Activated T-helper 1 cell treated with anti-CD3 and anti-CD28 coated beads, Interleukin-12 subunit alpha, Interleukin-12 subunit beta, Interleukin-2, Interleukin-4 antibody, amounts not matched to agents 30 ng/mL and 10 ng/mL and 1 ng/mL, durations not matched to agents 14 hours and 24 hours and 36 hours (primary cell): ENCODE measurements at regions of chr7 and their contacts with region 1.

Region 1: GRCh38 chr7:140696680-140697446 is at the start of gene NDUFB2:
- DNase-seq: peak; percentile 85
- H3K4me3 Mint-ChIP-seq: peak within 1 kb of the TSS; percentile 90
- H3K27ac Mint-ChIP-seq: peak within 1 kb of the TSS; percentile 96
- H3K4me1 Mint-ChIP-seq: peaks cover 30% of the 10 kb centered on the region
- H3K27me3 Mint-ChIP-seq: no peaks in the 10 kb centered on the region
- total RNA-seq, gene NDUFB2: 178 and 194 TPM in 2 replicates

Region 2: DNA sequence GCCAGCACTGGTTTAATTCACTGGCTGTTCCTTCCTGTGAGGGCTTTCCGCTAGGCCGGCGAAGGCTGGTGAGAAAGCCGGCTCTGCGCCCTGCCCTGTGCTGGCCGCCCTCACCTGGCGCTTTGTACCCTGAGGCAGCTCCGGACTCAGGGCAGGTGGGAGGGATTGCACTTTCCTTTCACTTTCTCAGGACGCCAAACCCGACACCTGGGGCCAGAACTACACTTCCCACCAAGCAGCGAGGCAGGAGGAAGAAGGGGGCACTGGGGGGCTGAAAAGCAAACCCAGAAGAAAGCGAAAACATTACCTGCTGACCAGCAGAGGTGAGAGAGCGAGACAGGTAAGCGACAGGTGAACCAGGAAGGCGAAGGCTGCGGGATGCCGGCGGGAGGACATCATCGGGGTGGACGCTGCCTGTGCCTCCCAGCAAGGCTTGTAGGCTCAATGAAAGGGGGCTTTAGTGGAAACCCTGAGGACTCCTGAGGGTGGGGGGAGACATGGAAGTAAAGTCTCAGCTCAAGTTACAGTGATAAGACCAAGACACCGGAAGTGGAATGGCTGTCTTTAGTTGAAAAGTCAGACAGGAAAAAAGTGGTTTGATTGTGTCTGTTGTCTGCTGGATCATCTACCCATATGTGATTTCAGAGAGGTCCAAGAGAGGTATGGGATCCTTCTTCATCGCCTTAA is 292.8 kb before region 1 on chr7 and contains the start of gene RAB19:
- intact Hi-C with region 1: loop called (anchors 5 kb)
- DNase-seq: peak; percentile 26
- H3K4me3 Mint-ChIP-seq: peak within 1 kb of the TSS; percentile 95
- H3K27ac Mint-ChIP-seq: peak within 1 kb of the TSS; percentile 90
- H3K4me1 Mint-ChIP-seq: peaks cover 49% of the 10 kb centered on the region
- H3K27me3 Mint-ChIP-seq: no peaks in the 10 kb centered on the region
- total RNA-seq, gene RAB19: 23.9 and 27.0 TPM in 2 replicates

Region 3: DNA sequence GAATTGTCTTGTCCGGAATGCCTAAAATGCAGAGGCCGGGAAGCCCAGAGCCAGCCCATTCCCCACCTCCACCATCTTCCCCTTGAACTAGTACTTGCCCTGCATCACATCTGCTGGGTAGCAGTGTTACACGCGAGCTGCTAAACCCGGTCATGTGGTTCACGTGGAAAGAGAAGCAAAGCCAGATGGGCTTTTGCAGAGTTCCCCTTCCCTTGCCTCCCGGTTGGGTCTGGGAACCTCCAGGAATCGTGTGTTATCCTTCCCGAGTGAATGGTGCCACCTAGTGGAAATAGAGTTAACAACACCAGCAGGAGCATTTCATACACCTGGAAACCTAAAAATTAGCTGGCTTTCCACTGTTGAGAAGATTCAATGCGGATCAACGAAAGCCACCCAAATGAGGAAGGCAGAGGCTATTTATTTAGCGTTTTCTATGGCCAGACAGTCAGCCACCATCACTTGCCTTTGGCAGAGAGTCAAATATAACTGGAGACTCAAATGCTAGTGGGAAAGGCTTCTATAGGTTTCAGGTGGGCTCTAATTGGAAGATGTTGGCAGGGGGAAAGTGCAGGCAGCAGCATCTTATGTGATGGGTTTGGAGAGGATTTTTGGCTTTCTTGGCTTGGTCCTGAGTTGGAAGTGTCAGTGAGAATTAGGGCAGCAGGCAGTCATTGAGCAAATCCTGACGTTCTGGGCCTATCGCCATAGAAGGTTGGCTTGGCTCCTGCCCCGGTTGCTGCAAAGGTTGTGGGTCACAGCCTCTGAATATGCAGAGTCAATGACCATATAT is 43.3 kb before region 1 on chr7:
- intact Hi-C with region 1: loop called (anchors 1 kb)
- DNase-seq: no peak
- H3K4me3 Mint-ChIP-seq: no peak overlapping the region
- H3K27ac Mint-ChIP-seq: no peak overlapping the region
- H3K4me1 Mint-ChIP-seq: peaks cover 21% of the 10 kb centered on the region
- H3K27me3 Mint-ChIP-seq: peaks cover 49% of the 10 kb centered on the region

Region 4: DNA sequence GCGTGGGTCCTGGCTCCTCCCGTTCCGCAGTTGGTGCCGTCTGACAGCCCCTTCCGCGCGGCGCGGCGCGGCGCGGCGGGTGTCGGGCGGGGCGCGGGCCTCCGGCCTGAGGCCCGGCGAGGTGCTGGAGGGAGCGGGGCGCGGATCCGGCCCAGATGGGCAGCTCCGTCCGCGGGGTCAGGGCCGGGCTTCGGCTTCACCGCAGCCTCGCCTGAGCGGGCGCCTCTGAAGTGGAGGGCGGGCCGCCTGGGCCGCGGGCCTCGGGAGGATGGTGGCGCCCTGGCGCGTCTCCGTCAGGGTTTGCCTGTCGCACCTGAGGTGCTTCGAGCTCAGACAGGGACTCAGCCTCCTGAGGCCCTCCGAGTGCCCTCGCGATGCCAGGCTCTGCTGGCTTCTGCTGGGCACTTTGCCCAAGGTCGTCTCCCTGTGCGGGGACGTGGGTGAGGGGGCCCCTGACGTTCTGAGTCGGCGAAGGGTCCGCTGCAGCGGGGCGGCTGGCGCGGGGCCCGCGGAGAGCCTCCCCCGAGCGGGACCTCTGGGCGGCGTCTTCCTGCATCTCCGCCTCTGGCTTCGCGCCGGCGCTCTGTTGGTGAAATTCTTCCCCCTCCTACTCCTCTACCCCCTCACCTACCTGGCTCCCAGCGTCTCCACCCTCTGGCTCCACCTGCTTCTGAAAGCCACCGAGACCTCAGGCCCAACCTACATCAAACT is 23.6 kb before region 1 on chr7:
- intact Hi-C with region 1: loop called (anchors 1 kb)
- DNase-seq: peak; percentile 56
- H3K4me3 Mint-ChIP-seq: peak overlapping the region; percentile 88
- H3K27ac Mint-ChIP-seq: peak overlapping the region; percentile 89
- H3K4me1 Mint-ChIP-seq: peaks cover 27% of the 10 kb centered on the region
- H3K27me3 Mint-ChIP-seq: peaks cover 2% of the 10 kb centered on the region

Region 5: GRCh38 chr7:141072548-141073172 is 375.8 kb after region 1 on chr7:
- intact Hi-C with region 1: loop called (anchors 2 kb)
- DNase-seq: peak; percentile 40
- H3K4me3 Mint-ChIP-seq: peak overlapping the region; percentile 79
- H3K27ac Mint-ChIP-seq: no peak overlapping the region
- H3K4me1 Mint-ChIP-seq: peaks cover 36% of the 10 kb centered on the region
- H3K27me3 Mint-ChIP-seq: peaks cover 39% of the 10 kb centered on the region

Region 6: DNA sequence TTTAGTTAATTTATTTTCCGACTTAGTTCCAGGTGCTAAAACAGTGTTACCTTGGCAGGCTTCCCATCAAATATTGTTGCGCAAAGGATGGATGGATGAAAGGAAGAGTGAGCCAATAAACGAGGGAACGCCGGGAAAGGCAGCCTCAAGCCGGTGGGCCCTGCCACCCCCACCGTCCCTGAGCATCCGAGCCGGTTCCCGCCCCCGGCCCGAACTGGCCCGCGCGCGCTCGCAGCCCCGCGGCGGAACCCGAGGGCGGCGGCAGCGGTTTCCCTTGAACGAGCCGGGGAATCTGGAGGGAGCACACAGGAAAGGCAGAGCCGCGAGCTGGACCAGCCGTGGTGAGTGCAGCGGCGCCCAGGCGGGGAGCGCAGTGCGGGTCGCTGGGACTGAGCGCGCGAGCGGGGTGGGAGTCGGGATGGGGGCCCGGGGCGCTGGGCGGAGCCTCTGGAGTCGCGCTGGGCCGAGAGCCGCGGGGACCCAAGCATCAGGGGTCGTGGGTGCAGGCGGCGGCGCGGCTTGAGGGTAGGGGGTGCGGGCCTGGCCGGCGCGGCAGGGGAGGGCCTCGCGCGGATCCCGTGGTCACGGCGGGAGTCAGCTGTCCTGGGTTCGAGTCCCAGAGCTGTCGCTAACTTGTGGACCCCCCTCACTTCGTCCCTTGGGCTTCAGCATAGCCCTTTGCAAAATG is 854.4 kb after region 1 on chr7 and contains the start of gene AGK:
- intact Hi-C with region 1: loop called (anchors 10 kb)
- DNase-seq: peak; percentile 79
- H3K4me3 Mint-ChIP-seq: peak within 1 kb of the TSS; percentile 91
- H3K27ac Mint-ChIP-seq: peak within 1 kb of the TSS; percentile 97
- H3K4me1 Mint-ChIP-seq: peaks cover 50% of the 10 kb centered on the region
- H3K27me3 Mint-ChIP-seq: no peaks in the 10 kb centered on the region
- total RNA-seq, gene AGK: 174 and 179 TPM in 2 replicates